Caco-2 (cell line): ENCODE measurements at regions of chr11 and their contacts with region 1.

Region 1: GRCh38 chr11:111422494-111423249 is 43.6 kb upstream of the POU2AF1 start:
- DNase-seq: peak; percentile 94 to 95
- H3K4me3 ChIP-seq: no peak overlapping the region
- H3K4me3 Mint-ChIP-seq: no peak overlapping the region
- H3K27ac Mint-ChIP-seq: peak overlapping the region; percentile 38
- H3K4me1 ChIP-seq: peaks cover 11% of the 10 kb centered on the region
- H3K4me1 Mint-ChIP-seq: peaks cover 12% of the 10 kb centered on the region
- H3K27me3 ChIP-seq: no peaks in the 10 kb centered on the region
- H3K27me3 Mint-ChIP-seq: no peaks in the 10 kb centered on the region
- CTCF ChIP-seq: peak; percentile 100

Region 2: GRCh38 chr11:110711776-110712658 is 710.7 kb before region 1 on chr11 and contains the start of gene ARHGAP20:
- CTCF ChIA-PET with region 1: no interaction called
- POLR2A ChIA-PET with region 1: no interaction called
- intact Hi-C with region 1: loop called (anchors 10 kb)
- DNase-seq: peak; percentile 56 to 78
- H3K4me3 ChIP-seq: peak within 1 kb of the TSS; percentile 40
- H3K4me3 Mint-ChIP-seq: peak within 1 kb of the TSS; percentile 70
- H3K27ac Mint-ChIP-seq: no peak within 1 kb of the TSS
- H3K4me1 ChIP-seq: peaks cover 19% of the 10 kb centered on the region
- H3K4me1 Mint-ChIP-seq: peaks cover 14% of the 10 kb centered on the region
- H3K27me3 ChIP-seq: peaks cover 12% of the 10 kb centered on the region
- H3K27me3 Mint-ChIP-seq: peaks cover 46% of the 10 kb centered on the region
- CTCF ChIP-seq: no peak
- total RNA-seq, gene ARHGAP20: 0.05 TPM in 1 of 2 replicates, not detected in the other

Region 3: DNA sequence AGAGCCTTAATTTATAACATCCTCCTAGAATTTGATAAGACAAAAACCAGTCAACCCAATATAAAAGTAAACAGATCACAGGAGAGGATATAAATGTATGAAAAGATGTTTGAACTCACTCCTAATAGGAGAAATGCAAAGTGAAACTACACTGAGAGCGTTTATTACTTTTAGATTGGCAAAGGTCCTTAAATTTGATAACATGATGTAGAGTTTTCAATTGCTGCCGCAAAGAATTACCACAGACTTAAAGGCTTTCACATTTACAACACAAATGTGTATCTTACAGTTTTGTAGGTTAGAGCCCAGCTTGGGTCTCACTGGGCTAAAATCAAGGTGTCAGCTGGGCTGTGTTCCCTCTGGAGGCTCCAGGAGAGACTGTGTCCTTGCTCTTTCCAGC is 186.3 kb before region 1 on chr11:
- CTCF ChIA-PET with region 1: no interaction called
- POLR2A ChIA-PET with region 1: interaction called, 4 read pairs
- intact Hi-C with region 1: loop called (anchors 1 kb)
- DNase-seq: no peak
- H3K4me3 ChIP-seq: no peak overlapping the region
- H3K4me3 Mint-ChIP-seq: no peak overlapping the region
- H3K27ac Mint-ChIP-seq: no peak overlapping the region
- H3K4me1 ChIP-seq: no peaks in the 10 kb centered on the region
- H3K4me1 Mint-ChIP-seq: no peaks in the 10 kb centered on the region
- H3K27me3 ChIP-seq: no peaks in the 10 kb centered on the region
- H3K27me3 Mint-ChIP-seq: peaks cover 34% of the 10 kb centered on the region
- CTCF ChIP-seq: no peak

Region 4: DNA sequence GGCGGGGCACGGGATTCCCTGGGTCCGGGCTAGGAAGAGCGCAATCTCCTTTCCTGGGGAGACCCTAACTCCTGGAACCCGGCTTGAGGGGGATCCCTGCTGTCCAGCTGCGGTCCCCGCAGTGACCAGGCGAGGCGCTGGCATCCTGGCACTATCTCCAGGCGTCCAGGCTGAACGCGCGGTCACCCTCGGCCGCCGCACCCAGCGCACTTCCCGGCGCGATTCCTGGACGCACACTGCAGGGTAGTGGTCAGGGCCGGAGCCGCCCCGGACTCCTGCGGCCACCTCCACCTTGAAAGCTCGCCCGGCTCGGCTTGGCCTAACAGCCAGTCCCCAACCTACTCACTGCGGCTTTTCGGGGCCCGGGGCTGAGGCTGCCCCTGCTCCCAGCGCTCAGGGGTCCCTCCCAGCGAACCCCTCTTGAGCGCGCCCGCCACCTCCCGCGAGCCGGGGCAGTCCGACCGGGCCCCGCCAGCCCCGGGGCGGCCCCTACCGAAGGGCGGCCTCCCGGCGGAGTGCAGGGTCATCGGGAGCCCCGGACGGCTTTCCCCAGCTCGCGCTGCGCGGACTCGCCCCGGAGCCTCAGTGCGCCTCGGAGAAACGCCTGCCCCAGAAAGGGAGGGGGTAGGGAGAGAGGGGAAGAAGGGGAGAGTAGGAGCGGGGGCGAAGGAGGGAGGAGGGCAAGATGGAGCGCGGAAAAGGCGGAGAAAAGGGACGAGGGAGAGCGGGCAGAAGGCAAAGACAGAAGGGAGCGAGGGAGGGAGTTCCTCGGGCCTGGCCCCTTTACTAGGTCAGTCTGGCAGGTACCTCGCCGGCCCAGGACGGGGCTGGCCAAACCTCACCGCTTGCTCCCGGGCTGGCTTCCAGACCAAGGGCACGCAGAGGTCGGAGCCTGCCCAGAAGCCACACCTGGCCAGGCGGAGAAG is 123.3 kb before region 1 on chr11:
- CTCF ChIA-PET with region 1: interaction called, 18 read pairs
- POLR2A ChIA-PET with region 1: no interaction called
- intact Hi-C with region 1: loop called (anchors 1 kb)
- DNase-seq: peak; percentile 79 to 87
- H3K4me3 ChIP-seq: peak overlapping the region; percentile 76
- H3K4me3 Mint-ChIP-seq: peak overlapping the region; percentile 82
- H3K27ac Mint-ChIP-seq: peak overlapping the region; percentile 72
- H3K4me1 ChIP-seq: peaks cover 37% of the 10 kb centered on the region
- H3K4me1 Mint-ChIP-seq: peaks cover 34% of the 10 kb centered on the region
- H3K27me3 ChIP-seq: no peaks in the 10 kb centered on the region
- H3K27me3 Mint-ChIP-seq: no peaks in the 10 kb centered on the region
- CTCF ChIP-seq: peak; percentile 65 to 89

Region 5: GRCh38 chr11:111359223-111360149 is 63.2 kb before region 1 on chr11:
- CTCF ChIA-PET with region 1: interaction called, 6 read pairs
- POLR2A ChIA-PET with region 1: interaction called, 3 read pairs
- intact Hi-C with region 1: loop called (anchors 1 kb)
- DNase-seq: no peak
- H3K4me3 ChIP-seq: no peak overlapping the region
- H3K4me3 Mint-ChIP-seq: peak overlapping the region; percentile 13
- H3K27ac Mint-ChIP-seq: no peak overlapping the region
- H3K4me1 ChIP-seq: peaks cover 73% of the 10 kb centered on the region
- H3K4me1 Mint-ChIP-seq: peaks cover 41% of the 10 kb centered on the region
- H3K27me3 ChIP-seq: no peaks in the 10 kb centered on the region
- H3K27me3 Mint-ChIP-seq: no peaks in the 10 kb centered on the region
- CTCF ChIP-seq: peak in 1 of 2 experiments; percentile 11

Region 6: DNA sequence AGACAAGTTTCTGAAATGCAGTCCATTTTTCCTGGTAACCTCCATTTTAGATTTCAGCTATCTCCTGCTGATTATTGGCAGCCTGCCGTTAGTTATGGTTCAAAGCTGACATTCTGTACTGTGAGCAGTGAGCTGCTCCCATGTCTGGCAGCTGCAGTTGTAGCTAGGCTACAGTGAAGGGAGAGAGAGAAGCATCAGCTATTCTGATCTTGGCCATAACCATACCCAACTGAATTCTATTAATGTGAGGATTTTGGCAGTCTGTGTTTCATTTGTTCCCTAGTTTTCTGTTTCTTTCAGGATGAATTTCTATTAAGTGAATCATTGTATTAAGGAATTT is 213.0 kb after region 1 on chr11:
- CTCF ChIA-PET with region 1: no interaction called
- POLR2A ChIA-PET with region 1: no interaction called
- intact Hi-C with region 1: no loop called
- DNase-seq: no peak
- H3K4me3 ChIP-seq: no peak overlapping the region
- H3K4me3 Mint-ChIP-seq: no peak overlapping the region
- H3K27ac Mint-ChIP-seq: no peak overlapping the region
- H3K4me1 ChIP-seq: peaks cover 32% of the 10 kb centered on the region
- H3K4me1 Mint-ChIP-seq: peaks cover 48% of the 10 kb centered on the region
- H3K27me3 ChIP-seq: no peaks in the 10 kb centered on the region
- H3K27me3 Mint-ChIP-seq: no peaks in the 10 kb centered on the region
- CTCF ChIP-seq: no peak